Lower leg skin (tissue), 4 donors: ENCODE measurements at regions of chr5 and their contacts with region 1.

Region 1: GRCh38 chr5:91383027-91383955 is at the start of gene ARRDC3:
- DNase-seq: peak; percentile 94 to 99
- H3K4me3 ChIP-seq: peak within 1 kb of the TSS; percentile 68
- CTCF ChIP-seq: no peak
- POLR2A ChIP-seq: peak in 1 of 2 donors; percentile 93
- total RNA-seq, gene ARRDC3: 67.1 to 119 (median 76.1) TPM

Region 2: DNA sequence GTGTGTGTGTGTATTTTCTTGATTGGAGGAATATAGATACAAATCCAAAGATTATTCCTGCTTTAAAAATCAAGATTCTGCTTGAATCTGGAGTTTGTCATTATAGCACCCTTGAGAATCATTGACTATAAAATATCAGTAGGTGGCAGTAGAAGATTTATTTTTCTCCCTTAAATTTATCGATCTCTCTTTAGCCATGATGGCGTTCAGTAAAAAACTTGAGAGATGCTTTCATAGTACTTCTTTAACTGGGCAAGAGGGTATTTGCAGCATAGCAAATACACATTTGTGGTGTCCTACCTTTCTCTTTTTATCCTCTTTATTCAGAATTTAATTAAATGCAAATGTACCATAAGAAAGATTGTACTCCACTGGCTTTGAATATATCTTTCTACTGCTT is 517.0 kb before region 1 on chr5:
- intact Hi-C with region 1: loop called (anchors 10 kb)
- DNase-seq: no peak
- H3K4me3 ChIP-seq: no peak overlapping the region
- CTCF ChIP-seq: no peak
- POLR2A ChIP-seq: no peak

Region 3: GRCh38 chr5:90932052-90932699 is 451.1 kb before region 1 on chr5:
- intact Hi-C with region 1: loop called (anchors 2 kb)
- DNase-seq: peak in 1 of 2 donors; percentile 51
- H3K4me3 ChIP-seq: no peak overlapping the region
- CTCF ChIP-seq: peak in 1 of 3 donors; percentile 51
- POLR2A ChIP-seq: no peak

Region 4: GRCh38 chr5:91101600-91102379 is 281.5 kb before region 1 on chr5:
- intact Hi-C with region 1: loop called (anchors 5 kb)
- DNase-seq: peak; percentile 76 to 89
- H3K4me3 ChIP-seq: no peak overlapping the region
- CTCF ChIP-seq: peak in 1 of 3 donors; percentile 49
- POLR2A ChIP-seq: no peak

Region 5: DNA sequence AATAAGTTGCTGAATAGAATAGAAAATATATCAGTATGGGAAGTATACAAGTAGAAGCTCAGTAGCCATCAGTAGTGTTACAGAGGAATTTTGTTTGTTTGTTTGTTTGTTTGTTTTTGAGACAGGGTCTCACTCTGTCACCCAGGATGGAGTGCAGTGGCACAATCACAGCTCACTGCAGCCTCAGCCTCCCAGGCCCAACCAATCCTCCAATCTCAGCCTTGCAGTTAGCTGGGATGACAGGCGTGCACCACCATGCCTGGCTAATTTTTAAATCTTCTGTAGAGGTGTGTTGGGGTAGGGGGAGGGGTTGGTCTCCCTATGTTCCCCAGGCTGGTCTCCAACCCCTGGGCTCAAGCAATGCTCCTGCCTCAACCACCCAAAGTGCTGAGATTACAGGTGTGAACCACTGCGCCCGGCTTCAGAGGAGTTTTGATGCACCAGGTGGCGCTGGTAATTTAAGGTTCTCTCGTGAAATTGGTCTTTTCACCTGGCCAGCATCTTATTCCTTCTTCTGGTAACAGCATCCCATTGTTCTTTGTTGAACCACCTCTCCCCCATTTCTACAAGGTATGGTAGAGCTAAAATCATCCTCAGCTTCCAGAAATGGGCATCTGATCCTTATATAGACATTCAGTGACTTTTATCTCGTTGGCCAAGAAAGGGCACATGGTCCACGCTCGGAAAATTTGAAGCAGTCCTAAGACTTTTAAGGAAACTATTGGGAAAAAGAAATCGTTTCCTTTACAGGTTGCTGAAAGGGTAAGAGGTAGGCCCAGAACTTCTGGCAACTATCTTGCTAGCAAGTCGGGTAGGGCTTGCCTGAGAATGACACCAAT is 157.2 kb before region 1 on chr5:
- intact Hi-C with region 1: loop called (anchors 10 kb)
- DNase-seq: no peak
- H3K4me3 ChIP-seq: no peak overlapping the region
- CTCF ChIP-seq: no peak
- POLR2A ChIP-seq: no peak

Region 6: DNA sequence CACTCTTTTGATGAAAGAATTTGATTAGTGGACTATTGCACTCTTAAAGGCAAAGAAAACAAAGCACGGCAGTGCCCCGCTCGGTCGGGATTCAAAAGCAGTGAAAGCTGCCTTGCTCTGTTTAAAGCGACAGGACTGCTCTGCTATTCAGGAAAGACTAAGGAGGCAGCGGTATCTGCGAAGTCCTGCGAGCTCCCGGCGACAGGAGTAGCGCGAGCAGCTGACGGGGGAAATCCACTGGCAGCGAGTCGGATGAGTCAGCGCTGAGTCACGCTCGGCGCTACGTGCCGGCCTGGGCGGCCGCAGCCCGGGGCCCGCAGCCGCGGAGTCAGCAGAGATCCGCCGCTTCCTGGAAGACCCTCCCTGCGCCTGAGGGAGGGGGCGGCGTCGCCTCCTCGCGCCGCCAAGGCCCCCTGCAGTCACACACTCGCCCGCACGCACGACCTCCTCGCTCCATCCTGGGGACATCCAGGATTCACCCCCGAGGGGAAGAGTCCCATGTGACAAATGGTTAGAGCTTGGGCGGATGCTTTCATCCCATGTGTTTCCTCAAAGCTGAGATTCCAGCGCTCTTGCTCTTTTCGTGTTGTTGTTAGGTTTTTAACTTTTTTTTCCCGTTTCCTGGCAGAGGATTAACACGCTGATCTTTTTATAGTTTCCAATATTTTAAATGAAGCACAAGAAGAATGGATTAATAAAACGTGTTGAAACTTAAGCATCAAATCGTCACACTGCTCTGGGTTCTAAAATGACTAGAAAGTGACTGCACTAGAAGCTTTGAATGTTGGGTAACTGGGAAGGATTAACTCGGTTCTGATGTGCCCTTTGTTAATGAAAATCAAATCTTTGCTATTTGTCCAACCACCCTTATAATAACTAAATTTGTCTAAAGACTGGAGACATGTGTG is 102.7 kb before region 1 on chr5:
- intact Hi-C with region 1: loop called (anchors 10 kb)
- DNase-seq: peak; percentile 90 to 98
- H3K4me3 ChIP-seq: peak overlapping the region; percentile 23
- CTCF ChIP-seq: no peak
- POLR2A ChIP-seq: peak in 1 of 2 donors; percentile 2

Region 7: GRCh38 chr5:92371889-92372235 is 988.6 kb after region 1 on chr5:
- intact Hi-C with region 1: no loop called
- DNase-seq: no peak
- H3K4me3 ChIP-seq: no peak overlapping the region
- CTCF ChIP-seq: no peak
- POLR2A ChIP-seq: no peak